Mammary epithelial cell (primary cell): ENCODE measurements at regions of chr11 and their contacts with region 1.

Region 1: GRCh38 chr11:76329084-76329984 is 51.6 kb downstream of the THAP12 start:
- DNase-seq: no peak
- H3K4me3 ChIP-seq: no peak overlapping the region
- H3K27ac ChIP-seq: no peak overlapping the region
- H3K4me1 ChIP-seq: no peaks in the 10 kb centered on the region
- H3K27me3 ChIP-seq: peaks cover 3% of the 10 kb centered on the region
- CTCF ChIP-seq: no peak

Region 2: DNA sequence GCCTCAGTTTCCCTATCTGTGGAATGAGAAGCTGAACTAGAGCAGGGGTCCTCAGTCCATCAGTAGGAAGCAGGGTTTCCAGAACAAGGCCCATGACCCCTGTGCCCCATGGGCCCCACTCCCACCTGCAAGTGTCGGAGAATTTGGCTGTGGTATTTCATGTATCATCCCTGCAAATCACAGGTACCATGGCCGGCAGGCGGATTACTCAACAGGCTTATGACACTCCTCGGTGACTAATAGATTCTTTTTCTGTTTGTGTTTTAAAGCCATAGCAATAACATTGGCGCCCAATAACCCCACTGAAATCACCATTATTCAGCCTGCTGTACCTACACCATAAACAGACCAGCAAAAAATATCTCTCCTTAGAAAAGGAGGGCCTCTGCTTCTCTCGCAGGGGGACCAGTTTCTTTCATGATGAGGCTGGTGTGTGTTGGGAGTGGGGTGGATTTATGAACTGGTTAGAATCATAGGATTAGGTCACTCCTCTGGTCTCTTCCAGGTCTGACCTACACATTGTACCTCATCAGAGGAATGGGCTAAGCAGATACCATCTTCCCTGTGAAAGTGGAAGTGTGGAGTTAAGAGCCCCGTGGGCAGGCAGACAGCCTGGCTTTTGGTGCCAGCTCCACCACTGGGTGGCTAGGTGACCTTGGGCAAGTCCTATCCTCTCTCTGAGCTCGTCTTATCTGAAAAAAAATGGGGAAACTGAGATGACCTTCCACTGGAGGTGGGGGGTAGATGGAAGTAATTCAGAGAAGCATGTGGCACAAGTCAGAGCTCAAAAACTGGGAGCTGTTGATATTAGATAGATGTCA is 62.9 kb before region 1 on chr11:
- CTCF ChIA-PET with region 1: no interaction called
- dilution Hi-C with region 1: loop called (anchors 5 kb)
- in situ Hi-C with region 1: no loop called
- intact Hi-C with region 1: no loop called
- DNase-seq: peak; percentile 88
- H3K4me3 ChIP-seq: no peak overlapping the region
- H3K27ac ChIP-seq: peak overlapping the region; percentile 77
- H3K4me1 ChIP-seq: peaks cover 18% of the 10 kb centered on the region
- H3K27me3 ChIP-seq: no peaks in the 10 kb centered on the region
- CTCF ChIP-seq: no peak

Region 3: GRCh38 chr11:76361374-76361773 is 32.0 kb after region 1 on chr11:
- CTCF ChIA-PET with region 1: no interaction called
- dilution Hi-C with region 1: no loop called
- in situ Hi-C with region 1: no loop called
- intact Hi-C with region 1: no loop called
- DNase-seq: no peak
- H3K4me3 ChIP-seq: no peak overlapping the region
- H3K27ac ChIP-seq: no peak overlapping the region
- H3K4me1 ChIP-seq: no peaks in the 10 kb centered on the region
- H3K27me3 ChIP-seq: no peaks in the 10 kb centered on the region
- CTCF ChIP-seq: no peak

Region 4: DNA sequence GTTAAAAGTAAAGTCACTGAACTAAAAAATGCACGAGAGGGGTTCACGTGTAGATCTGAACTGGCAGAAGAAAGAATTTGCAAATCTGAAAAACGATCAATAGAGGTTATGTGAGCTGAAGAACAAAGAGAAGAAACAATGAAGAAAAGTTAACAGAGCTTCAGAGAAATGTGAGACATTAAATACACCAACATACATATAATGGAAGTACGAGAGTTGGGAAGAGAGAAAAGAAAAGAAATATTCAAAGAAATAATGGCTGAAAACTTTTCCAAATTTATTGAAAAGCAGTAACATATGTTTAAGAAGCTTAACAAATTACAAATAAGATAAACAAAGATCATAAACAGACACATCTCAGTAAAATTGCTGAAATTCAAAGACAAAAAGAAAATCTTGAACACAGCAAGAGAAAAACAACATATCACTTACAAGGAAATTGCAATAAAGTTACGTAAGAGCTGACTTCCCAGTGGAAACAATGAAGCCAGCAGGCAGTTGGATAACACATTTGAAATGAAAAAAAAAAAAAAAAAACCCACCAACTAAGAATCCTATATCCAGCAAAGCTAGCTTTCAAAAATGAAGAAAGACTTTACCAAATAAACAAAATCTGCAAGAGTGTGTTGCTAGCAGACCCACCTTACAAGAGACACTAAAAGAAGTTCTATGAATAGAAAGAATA is 172.3 kb after region 1 on chr11:
- CTCF ChIA-PET with region 1: no interaction called
- dilution Hi-C with region 1: no loop called
- in situ Hi-C with region 1: no loop called
- intact Hi-C with region 1: no loop called
- DNase-seq: no peak
- H3K4me3 ChIP-seq: no peak overlapping the region
- H3K27ac ChIP-seq: no peak overlapping the region
- H3K4me1 ChIP-seq: no peaks in the 10 kb centered on the region
- H3K27me3 ChIP-seq: no peaks in the 10 kb centered on the region
- CTCF ChIP-seq: no peak